Lower leg skin (tissue), 4 donors: ENCODE measurements at regions of chr2 and their contacts with region 1.

Region 1: GRCh38 chr2:37982147-37982582 is 57.1 kb downstream of the RMDN2 start:
- DNase-seq: peak; percentile 68 to 94
- H3K4me3 ChIP-seq: no peak overlapping the region
- CTCF ChIP-seq: peak in 1 of 3 donors; percentile 69
- POLR2A ChIP-seq: no peak

Region 2: DNA sequence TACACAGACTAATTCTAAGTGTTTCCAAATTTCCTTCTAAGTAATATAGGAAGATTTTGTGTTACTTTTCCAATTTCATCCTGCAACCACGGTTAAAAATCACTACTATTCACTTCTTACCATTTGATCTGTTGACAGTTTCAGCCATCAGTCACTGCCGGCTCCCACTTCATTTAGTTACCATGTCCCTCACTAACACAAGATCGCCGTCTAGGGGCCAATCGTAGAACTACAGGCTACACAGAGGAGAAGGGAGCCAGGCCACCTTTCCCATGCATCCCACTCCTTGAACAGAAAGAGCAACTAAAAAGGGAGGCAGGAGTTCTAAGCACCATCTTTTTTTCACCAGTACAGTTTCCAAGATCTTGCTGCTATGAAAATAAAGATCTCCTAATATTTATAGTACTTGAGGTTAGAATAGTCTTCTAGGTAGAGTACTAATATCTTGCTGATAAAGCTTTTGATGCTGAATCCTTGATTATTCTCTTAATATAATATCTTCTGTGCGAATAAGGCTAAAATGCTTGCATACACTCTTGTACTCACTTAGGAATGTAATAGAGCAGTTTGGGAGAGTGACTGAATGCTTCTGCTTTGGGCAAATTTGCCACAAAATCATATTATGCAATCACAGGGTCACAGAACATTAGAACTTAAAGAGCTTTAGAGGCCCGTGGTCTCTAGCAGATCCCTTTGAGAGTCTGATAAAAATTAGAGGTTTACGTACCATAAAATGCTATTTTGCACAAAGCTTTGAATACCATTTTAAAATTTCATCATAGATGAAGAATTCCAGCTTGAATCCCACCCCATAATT is 133.3 kb after region 1 on chr2:
- intact Hi-C with region 1: loop called (anchors 10 kb)
- DNase-seq: peak; percentile 84 to 95
- H3K4me3 ChIP-seq: no peak overlapping the region
- CTCF ChIP-seq: peak in 1 of 3 donors; percentile 37
- POLR2A ChIP-seq: no peak

Region 3: DNA sequence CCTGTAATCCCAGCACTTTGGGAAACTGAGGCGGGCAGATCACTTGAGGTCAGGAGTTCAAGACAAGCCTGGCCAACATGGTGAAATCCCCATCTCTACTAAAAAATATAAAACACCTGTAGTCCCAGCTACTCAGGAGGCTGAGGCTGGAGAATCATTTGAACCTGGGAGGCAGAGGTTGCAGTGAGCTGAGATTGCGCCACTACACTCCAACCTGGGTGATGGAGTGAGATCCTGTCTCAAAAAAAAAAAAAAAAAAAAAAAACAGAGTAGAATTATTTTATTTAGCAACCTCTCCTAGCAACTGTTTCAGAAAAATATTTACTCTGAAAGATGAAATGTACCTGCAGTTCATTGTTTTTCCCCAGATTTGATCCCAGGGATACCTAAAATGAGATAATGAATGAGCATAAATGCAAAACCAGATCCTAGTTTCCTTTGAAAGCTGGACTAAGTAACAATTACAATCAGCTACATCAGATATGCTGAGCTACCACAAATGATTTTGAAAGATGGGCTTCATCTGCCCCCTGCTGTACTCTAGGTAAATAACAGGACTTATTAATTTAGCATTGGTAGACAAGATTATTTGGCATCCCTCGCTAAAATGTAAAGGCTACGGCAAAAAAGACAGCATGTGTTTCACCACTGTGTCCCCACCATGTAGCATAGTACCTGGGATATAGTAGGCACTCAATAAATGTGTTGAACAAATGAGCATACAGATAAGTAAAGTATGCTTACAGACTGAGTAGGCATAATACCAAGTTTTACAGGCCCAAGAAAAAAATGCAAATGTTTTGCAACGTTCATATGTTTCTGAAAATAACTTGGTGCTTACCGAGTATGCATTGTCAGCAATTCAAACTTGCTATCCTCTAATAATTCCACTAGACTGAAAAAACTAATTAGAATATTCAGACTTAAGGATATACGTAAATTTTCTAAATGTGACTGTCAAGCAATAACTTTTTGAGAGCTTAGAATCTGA is 292.4 kb after region 1 on chr2:
- intact Hi-C with region 1: loop called (anchors 10 kb)
- DNase-seq: peak in 1 of 2 donors; percentile 50
- H3K4me3 ChIP-seq: no peak overlapping the region
- CTCF ChIP-seq: peak in 1 of 3 donors; percentile 36
- POLR2A ChIP-seq: no peak